ENCODE measurements at regions of chr6 and their contacts with region 1.

Region 1: GRCh38 chr6:13762611-13763441 is 51.2 kb upstream of the RANBP9 start:
- DNase-seq: peak; percentile 34
- H3K4me3 Mint-ChIP-seq: peak overlapping the region; percentile 75
- H3K27ac Mint-ChIP-seq: peak overlapping the region; percentile 92
- H3K4me1 Mint-ChIP-seq: peaks cover 52% of the 10 kb centered on the region
- H3K27me3 Mint-ChIP-seq: peaks cover 2% of the 10 kb centered on the region

Region 2: DNA sequence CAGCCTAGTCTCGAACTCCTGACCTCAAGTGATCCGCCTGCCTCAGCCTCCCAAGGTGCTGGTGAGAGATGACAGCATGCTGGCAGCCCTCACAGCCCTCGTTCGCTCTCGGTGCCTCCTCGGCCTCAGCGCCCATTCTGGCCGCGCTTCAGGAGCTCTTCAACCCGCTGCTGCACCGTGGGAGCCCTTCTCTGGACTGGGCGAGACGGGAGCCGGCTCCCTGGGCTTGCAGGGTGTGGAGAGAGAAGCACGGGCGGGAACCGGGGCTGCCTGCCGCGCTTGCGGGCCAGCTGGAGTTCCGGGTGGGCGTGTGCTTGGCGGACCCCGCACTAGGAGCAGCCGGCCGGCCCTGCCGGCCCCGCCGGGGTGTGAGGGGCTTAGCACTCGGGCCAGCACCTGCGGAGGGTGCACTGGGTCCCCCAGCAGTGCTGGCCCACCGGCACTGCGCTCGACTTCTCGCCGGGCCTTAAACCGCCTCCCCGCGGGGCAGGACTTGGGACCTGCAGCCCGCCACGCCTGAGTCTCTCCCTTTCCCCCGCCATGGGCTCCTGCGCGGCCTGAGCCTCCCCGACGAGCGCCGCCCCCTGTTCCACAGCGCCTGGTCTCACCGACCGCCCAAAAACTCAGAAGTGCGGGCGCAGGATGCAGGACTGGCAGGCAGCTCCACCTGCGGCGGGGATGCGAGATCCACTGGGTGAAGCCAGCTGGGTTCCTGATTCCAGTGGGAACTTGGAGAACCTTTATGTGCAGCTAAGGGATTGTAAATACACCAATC is 19.7 kb before region 1 on chr6:
- intact Hi-C with region 1: loop called (anchors 1 kb)
- DNase-seq: no peak
- H3K4me3 Mint-ChIP-seq: no peak overlapping the region
- H3K27ac Mint-ChIP-seq: no peak overlapping the region
- H3K4me1 Mint-ChIP-seq: peaks cover 8% of the 10 kb centered on the region
- H3K27me3 Mint-ChIP-seq: no peaks in the 10 kb centered on the region

Region 3: DNA sequence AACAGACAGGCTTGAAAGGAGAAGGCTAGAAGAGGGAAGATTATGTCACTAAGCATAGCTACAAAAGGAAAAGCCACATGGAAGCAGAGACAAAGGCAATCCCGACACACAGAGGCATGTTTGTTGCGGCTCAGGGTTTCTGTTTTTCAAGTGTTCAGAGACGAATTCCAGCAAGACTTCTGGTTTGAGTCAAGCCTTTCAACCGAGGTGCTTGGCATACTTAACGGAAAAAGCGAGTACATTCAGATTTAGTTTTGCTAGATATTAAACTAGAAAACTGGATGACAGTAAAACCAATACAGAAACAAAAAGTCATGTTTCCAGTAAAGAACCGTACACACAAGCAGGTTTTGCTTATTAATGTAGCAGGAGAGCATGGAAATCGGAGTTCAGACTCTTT is 24.3 kb after region 1 on chr6:
- intact Hi-C with region 1: loop called (anchors 1 kb)
- DNase-seq: no peak
- H3K4me3 Mint-ChIP-seq: peak overlapping the region; percentile 41
- H3K27ac Mint-ChIP-seq: peak overlapping the region; percentile 82
- H3K4me1 Mint-ChIP-seq: peaks cover 33% of the 10 kb centered on the region
- H3K27me3 Mint-ChIP-seq: no peaks in the 10 kb centered on the region